Activated CD4-positive, alpha-beta T cell treated with anti-CD3 and anti-CD28 coated beads for 36 hours (primary cell): ENCODE measurements at regions of chr11 and their contacts with region 1.

Region 1: GRCh38 chr11:2532704-2533586 is 88.1 kb downstream of the KCNQ1 start:
- DNase-seq: peak; percentile 97
- ATAC-seq: peak; percentile 90
- H3K4me3 Mint-ChIP-seq: peak overlapping the region; percentile 48
- H3K27ac Mint-ChIP-seq: no peak overlapping the region
- H3K4me1 Mint-ChIP-seq: peaks cover 15% of the 10 kb centered on the region
- H3K27me3 Mint-ChIP-seq: no peaks in the 10 kb centered on the region

Region 2: GRCh38 chr11:2420502-2421225 is 112.3 kb before region 1 on chr11:
- CTCF ChIA-PET with region 1: interaction called, 51 read pairs
- POLR2A ChIA-PET with region 1: no interaction called
- intact Hi-C with region 1: no loop called
- DNase-seq: peak; percentile 85
- ATAC-seq: peak; percentile 96
- H3K4me3 Mint-ChIP-seq: no peak overlapping the region
- H3K27ac Mint-ChIP-seq: no peak overlapping the region
- H3K4me1 Mint-ChIP-seq: no peaks in the 10 kb centered on the region
- H3K27me3 Mint-ChIP-seq: no peaks in the 10 kb centered on the region

Region 3: DNA sequence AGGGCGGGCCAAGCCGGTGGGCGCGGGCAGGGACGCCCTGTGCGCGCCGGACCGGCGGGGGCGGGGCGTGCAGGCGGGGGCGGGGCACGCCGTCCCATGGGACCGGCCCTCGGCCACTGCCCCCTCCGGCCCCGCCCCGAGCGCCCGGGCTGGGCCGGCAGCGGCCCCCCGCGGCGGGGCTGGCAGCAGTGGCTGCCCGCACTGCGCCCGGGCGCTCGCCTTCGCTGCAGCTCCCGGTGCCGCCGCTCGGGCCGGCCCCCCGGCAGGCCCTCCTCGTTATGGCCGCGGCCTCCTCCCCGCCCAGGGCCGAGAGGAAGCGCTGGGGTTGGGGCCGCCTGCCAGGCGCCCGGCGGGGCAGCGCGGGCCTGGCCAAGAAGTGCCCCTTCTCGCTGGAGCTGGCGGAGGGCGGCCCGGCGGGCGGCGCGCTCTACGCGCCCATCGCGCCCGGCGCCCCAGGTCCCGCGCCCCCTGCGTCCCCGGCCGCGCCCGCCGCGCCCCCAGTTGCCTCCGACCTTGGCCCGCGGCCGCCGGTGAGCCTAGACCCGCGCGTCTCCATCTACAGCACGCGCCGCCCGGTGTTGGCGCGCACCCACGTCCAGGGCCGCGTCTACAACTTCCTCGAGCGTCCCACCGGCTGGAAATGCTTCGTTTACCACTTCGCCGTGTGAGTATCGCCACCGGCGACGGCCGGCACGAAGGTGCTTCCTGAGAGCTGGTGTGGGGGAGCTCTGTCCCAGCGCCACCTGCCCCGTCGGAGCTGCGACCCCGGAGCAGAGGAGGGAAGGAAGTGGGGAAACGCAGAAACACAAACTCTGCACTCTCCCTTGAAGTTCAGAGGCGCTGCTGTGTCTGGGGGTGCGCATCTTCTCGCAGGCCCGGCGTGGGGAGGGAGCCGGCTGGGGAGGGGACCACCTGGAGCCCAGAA is 87.9 kb before region 1 on chr11 and contains the start of gene KCNQ1:
- CTCF ChIA-PET with region 1: interaction called, 7 read pairs
- POLR2A ChIA-PET with region 1: no interaction called
- intact Hi-C with region 1: loop called in 1 of 2 experiments (anchors 1 kb)
- DNase-seq: peak; percentile 63
- ATAC-seq: peak; percentile 63
- H3K4me3 Mint-ChIP-seq: peak within 1 kb of the TSS; percentile 86
- H3K27ac Mint-ChIP-seq: peak within 1 kb of the TSS; percentile 71
- H3K4me1 Mint-ChIP-seq: peaks cover 38% of the 10 kb centered on the region
- H3K27me3 Mint-ChIP-seq: no peaks in the 10 kb centered on the region
- total RNA-seq, gene KCNQ1: 9.1 to 10.9 TPM

Region 4: DNA sequence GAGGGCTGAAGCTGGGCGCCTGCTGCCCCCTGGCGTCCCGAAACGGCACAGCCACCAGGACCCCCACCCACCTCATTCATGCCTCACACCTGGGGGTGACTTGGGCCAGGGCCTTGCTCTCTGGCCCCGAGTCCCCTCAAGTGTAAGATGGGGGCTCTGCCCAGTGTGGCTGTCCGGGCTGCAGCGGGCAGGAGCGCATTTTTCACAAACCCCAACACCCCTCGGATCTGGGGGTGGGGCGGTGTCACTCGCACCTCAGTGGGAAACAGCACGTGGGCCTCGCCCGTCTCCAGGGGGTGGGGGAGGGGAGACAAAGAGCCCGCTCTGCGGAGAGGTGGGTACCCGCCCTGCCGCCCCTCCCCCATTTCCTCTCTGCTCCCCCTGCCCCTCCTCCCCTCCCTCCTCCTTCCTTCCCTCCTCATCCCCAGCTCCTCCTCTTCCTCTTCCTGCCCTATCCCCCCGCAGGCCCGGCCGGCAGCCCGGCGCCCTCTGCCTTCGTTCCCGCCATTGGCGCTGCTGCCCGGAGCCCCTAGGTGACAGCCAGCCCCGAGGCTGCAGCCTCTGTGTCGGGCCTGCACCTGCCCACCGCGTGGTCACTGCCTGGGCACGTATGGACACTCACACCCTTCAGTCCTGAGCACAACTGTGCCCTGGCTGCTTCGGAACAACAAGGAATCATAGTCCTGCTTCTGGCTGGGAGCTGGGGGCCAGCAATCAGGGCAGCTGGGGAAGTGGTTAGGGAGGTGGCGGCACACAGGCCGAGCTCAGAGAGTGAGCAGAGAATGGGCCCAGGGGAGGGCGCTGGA is 359.5 kb after region 1 on chr11:
- CTCF ChIA-PET with region 1: interaction called, 255 read pairs
- POLR2A ChIA-PET with region 1: interaction called, 4 read pairs
- intact Hi-C with region 1: loop called (anchors 1 kb)
- DNase-seq: peak; percentile 85
- ATAC-seq: peak; percentile 69
- H3K4me3 Mint-ChIP-seq: peak overlapping the region; percentile 75
- H3K27ac Mint-ChIP-seq: peak overlapping the region; percentile 80
- H3K4me1 Mint-ChIP-seq: peaks cover 18% of the 10 kb centered on the region
- H3K27me3 Mint-ChIP-seq: no peaks in the 10 kb centered on the region

Region 5: DNA sequence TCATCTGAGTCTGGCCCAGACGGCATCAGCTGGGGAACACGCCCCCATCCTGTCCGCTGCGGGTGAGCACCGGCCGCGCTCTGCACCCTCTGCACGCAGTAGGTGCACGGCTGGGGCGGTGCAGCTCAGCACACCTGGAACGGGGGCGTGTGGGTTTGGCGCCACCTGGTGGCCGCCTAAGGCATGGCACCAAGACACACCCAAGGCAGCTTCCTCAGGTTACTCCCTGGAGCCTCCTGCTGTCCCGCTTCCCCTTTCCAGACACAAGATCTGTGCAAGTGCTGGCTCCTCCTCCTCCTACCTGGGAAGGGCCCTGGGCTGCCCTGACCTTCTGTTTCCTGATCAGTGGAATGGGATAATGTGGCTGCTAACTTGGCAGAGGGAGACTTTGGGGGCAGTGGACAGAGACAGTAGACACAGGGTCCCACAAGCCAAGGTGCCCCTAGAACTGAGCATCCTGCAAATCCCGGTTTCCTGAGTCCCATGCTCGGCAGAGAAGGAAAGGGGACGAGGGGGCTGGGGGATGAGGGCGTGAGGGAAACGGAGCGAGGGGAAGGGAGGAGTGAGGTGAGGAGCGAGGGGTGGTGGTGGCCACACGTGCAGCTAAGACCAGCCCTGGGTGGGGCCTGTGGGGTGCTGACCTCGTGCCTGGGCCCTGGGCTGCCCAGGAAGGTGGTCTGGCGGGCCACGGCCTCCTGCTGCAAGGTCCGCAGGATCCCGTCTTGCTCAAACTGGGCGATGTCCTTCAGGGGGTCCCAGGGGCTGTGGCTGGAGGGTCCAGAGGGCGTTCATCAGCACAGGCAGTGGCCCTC is 559.1 kb after region 1 on chr11:
- CTCF ChIA-PET with region 1: interaction called, 10 read pairs
- POLR2A ChIA-PET with region 1: no interaction called
- intact Hi-C with region 1: loop called (anchors 1 to 2 kb)
- DNase-seq: peak; percentile 84
- ATAC-seq: peak; percentile 88
- H3K4me3 Mint-ChIP-seq: no peak overlapping the region
- H3K27ac Mint-ChIP-seq: no peak overlapping the region
- H3K4me1 Mint-ChIP-seq: no peaks in the 10 kb centered on the region
- H3K27me3 Mint-ChIP-seq: no peaks in the 10 kb centered on the region

Region 6: DNA sequence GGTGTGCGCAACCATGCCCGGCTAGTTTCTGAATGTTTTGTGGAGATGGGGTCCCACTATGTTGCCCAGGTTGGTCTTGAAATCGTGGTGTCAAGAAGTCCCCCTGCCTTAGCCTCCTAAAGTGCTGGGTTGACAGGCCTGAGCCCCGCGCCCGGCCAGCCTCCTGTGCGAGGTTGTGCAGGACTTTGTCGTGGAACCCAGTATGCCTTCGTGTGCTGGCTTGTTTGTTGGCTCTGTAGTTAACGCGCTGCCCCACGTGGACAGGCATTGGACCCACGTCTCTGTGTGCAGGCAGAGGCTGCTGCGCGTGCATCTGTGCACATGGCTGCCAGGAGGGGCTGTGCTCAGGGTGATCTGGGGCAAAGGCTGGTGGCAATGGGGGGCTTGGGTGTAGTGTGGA is 879.9 kb after region 1 on chr11:
- CTCF ChIA-PET with region 1: no interaction called
- POLR2A ChIA-PET with region 1: no interaction called
- intact Hi-C with region 1: loop called in 1 of 2 experiments (anchors 2 kb)
- DNase-seq: no peak
- ATAC-seq: no peak
- H3K4me3 Mint-ChIP-seq: no peak overlapping the region
- H3K27ac Mint-ChIP-seq: no peak overlapping the region
- H3K4me1 Mint-ChIP-seq: peaks cover 5% of the 10 kb centered on the region
- H3K27me3 Mint-ChIP-seq: no peaks in the 10 kb centered on the region